ENCODE measurements at regions of chr9 and their contacts with region 1.

Region 1: GRCh38 chr9:137578518-137579258 is at the start of gene DPH7:
- DNase-seq: peak; percentile 96
- H3K4me3 Mint-ChIP-seq: peak within 1 kb of the TSS; percentile 82
- H3K27ac Mint-ChIP-seq: peak within 1 kb of the TSS; percentile 79
- H3K4me1 Mint-ChIP-seq: peaks cover 35% of the 10 kb centered on the region
- H3K27me3 Mint-ChIP-seq: no peaks in the 10 kb centered on the region

Region 2: DNA sequence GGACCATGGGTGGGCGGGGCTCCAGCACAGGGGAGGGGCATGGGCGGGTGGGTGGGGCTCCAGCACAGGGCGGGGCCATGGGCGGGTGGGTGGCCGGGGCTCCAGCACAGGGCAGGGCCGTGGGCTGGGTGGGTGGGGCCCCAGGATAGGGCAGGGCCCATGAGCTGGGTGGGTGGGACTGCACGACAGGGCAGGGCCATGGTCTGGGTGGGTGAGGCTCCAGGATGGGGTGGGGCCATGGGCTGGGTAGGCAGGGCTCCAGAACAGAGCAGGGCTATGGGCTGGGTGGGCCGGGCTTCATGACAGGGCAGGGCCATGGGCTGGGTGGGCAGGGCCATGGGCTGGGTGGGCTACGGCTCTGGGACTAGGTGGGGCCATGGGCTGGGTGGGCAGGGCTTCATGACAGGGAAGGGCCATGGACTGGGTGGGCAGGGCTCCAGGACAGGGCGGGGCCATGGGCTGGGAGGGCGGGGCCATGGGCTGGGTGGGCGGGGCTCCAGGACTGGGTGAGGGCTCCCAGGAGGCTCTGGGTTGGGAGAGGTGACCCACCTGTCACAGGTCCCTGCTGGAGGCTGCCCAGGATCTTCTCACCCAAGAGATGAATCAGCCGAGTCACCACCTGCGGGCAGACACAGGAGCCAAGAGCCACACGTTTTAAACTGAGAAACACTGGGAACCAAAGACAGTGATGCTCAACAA is 86.1 kb before region 1 on chr9:
- CTCF ChIA-PET with region 1: no interaction called
- DNase-seq: peak; percentile 34
- H3K4me3 Mint-ChIP-seq: no peak overlapping the region
- H3K27ac Mint-ChIP-seq: no peak overlapping the region
- H3K4me1 Mint-ChIP-seq: peaks cover 11% of the 10 kb centered on the region
- H3K27me3 Mint-ChIP-seq: no peaks in the 10 kb centered on the region

Region 3: GRCh38 chr9:137589441-137590115 is 10.9 kb after region 1 on chr9:
- CTCF ChIA-PET with region 1: interaction called, 12 read pairs
- DNase-seq: peak; percentile 52
- H3K4me3 Mint-ChIP-seq: peak overlapping the region; percentile 84
- H3K27ac Mint-ChIP-seq: peak overlapping the region; percentile 72
- H3K4me1 Mint-ChIP-seq: peaks cover 26% of the 10 kb centered on the region
- H3K27me3 Mint-ChIP-seq: no peaks in the 10 kb centered on the region

Region 4: DNA sequence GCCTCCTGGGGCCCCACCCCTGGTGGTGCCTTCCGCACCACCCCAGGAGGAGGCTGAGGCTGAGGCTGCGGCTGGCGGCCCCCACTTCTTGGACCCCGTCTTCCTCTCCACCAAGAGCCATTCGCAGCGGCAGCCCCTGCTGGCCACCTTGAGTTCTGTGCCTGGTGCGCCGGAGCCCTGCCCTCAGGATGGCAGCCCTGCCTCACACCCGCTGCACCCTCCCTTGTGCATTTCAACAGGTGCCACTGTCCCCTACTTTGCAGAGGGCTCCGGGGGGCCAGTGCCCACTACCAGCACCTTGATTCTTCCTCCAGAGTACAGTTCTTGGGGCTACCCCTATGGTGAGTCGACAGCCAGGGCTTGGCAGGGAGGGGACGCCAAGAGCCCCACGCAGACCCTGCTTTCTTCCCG is 36.0 kb after region 1 on chr9:
- CTCF ChIA-PET with region 1: no interaction called
- DNase-seq: no peak
- H3K4me3 Mint-ChIP-seq: no peak overlapping the region
- H3K27ac Mint-ChIP-seq: no peak overlapping the region
- H3K4me1 Mint-ChIP-seq: peaks cover 35% of the 10 kb centered on the region
- H3K27me3 Mint-ChIP-seq: no peaks in the 10 kb centered on the region

Measured in activated naive CD4-positive, alpha-beta T cell treated with anti-CD3 and anti-CD28 coated beads, Interleukin-2, amount 10 ng/mL, durations not matched to agents 7 days and 5 days (primary cell).